Right ventricle myocardium inferior (tissue), 1 donor: ENCODE measurements at regions of chr12 and their contacts with region 1.

Region 1: DNA sequence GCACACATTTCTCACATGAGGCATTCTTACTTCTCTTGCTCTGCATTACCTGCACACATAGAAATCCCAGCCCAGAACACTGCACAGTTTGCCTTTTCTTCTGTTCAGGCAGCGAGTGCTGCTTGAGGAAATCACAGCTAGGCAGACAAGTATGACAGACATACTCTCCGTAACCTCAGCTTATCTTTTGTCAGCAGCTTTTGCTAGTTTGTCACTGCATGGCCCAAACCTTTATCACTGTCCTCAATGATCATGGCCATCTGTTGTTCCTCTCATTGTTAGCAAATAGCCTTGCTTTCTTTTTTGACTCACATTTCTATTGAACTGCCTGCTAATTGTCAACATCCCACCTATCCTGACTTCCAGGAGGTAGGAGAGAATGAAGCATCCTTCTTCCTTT is 5.3 kb downstream of the ZNF10 start:
- DNase-seq: no peak
- ATAC-seq: no peak

Region 2: GRCh38 chr12:132948146-132949066 is 187.3 kb before region 1 on chr12:
- intact Hi-C with region 1: no loop called
- DNase-seq: no peak
- ATAC-seq: no peak

Region 3: GRCh38 chr12:133165776-133166175 is 30.0 kb after region 1 on chr12:
- intact Hi-C with region 1: loop called (anchors 2 kb)
- DNase-seq: no peak
- ATAC-seq: no peak